PC-3 (cell line): ENCODE measurements at regions of chr17 and their contacts with region 1.

Region 1: GRCh38 chr17:4505182-4505581 is 6.5 kb downstream of the SPNS2 start:
- DNase-seq: peak; percentile 53
- ATAC-seq: peak; percentile 35; the same call in 1 of the 2 replicates
- H3K4me3 ChIP-seq: no peak overlapping the region
- H3K27ac ChIP-seq: no peak overlapping the region
- H3K4me1 ChIP-seq: peaks cover 17% of the 10 kb centered on the region
- H3K27me3 ChIP-seq: peaks cover 2% of the 10 kb centered on the region; the same call in 1 of the 2 replicates
- CTCF ChIP-seq: no peak

Region 2: GRCh38 chr17:4206962-4207361 is 298.2 kb before region 1 on chr17:
- CTCF ChIA-PET with region 1: no interaction called
- POLR2A ChIA-PET with region 1: interaction called, 12 read pairs
- intact Hi-C with region 1: no loop called
- DNase-seq: no peak
- ATAC-seq: no peak
- H3K4me3 ChIP-seq: no peak overlapping the region
- H3K27ac ChIP-seq: no peak overlapping the region
- H3K4me1 ChIP-seq: no peaks in the 10 kb centered on the region
- H3K27me3 ChIP-seq: no peaks in the 10 kb centered on the region
- CTCF ChIP-seq: no peak

Region 3: DNA sequence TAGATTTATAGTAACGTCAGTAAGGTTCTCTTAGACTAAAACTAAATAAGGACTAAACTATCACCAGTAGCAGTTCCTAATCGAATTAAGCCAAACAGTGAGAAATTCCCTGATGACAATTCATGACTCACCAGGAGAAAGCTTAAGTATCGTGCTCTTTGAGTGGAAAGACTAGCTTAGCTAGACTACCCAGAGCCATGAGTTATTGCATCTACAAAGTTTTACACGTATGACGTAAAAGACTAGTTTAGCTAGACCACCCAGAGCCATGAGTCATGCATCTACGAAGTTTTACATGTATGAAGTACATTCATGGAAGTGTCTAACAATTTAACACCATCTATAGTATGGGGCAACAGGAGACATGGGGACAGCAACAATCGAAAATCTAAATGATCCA is 175.3 kb before region 1 on chr17:
- CTCF ChIA-PET with region 1: no interaction called
- POLR2A ChIA-PET with region 1: no interaction called
- intact Hi-C with region 1: no loop called
- DNase-seq: peak; percentile 91
- ATAC-seq: peak; percentile 49
- H3K4me3 ChIP-seq: no peak overlapping the region
- H3K27ac ChIP-seq: peak overlapping the region; percentile 87
- H3K4me1 ChIP-seq: peaks cover 63% of the 10 kb centered on the region
- H3K27me3 ChIP-seq: no peaks in the 10 kb centered on the region
- CTCF ChIP-seq: no peak

Region 4: GRCh38 chr17:4444782-4445473 is 60.3 kb before region 1 on chr17:
- CTCF ChIA-PET with region 1: no interaction called
- POLR2A ChIA-PET with region 1: no interaction called
- intact Hi-C with region 1: no loop called
- DNase-seq: peak; percentile 71
- ATAC-seq: peak; percentile 93
- H3K4me3 ChIP-seq: no peak overlapping the region
- H3K27ac ChIP-seq: no peak overlapping the region
- H3K4me1 ChIP-seq: peaks cover 8% of the 10 kb centered on the region
- H3K27me3 ChIP-seq: no peaks in the 10 kb centered on the region
- CTCF ChIP-seq: no peak